ENCODE measurements at regions of chr2 and their contacts with region 1.

Region 1: DNA sequence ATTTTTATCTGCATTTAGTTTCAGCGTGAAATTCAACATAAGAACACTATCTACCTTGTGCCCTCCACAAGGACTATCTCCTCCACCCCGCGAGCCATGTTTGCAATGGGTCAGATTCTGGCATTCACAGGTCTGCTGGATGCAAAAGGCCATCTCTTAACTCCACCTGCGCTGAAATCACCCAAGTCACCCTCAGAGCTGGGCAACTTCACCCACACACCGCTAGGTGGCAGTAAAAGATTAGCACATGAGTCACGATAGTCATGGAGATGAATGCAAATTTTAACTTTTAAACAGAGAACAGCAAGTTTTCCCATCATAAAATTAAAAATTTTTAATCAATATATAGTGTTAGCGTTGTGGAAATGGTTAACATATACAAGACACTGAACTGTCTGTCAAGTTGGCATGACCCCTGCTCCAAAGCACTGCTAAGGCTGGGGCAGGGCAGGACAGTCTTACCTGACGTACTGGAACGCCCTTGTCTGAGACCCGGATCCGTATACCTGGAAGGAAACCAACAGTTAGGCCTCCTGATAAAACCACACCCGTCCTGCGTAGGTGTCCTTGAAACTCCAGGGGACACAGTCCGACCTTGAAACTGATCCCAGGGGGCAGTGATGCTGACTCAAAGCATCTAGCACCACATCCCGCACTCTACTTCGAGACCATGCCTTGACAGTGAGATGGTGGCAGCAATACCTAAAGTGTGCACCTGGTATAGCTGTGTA is 89.6 kb downstream of the UXS1 start:
- DNase-seq: peak; percentile 58
- H3K4me3 ChIP-seq: no peak overlapping the region
- H3K27ac ChIP-seq: no peak overlapping the region
- H3K4me1 ChIP-seq: no peaks in the 10 kb centered on the region
- H3K27me3 ChIP-seq: no peaks in the 10 kb centered on the region
- CTCF ChIP-seq: peak; percentile 82 to 88 (median 86)
- POLR2A ChIP-seq: no peak

Region 2: GRCh38 chr2:106193977-106194778 is 89.7 kb after region 1 on chr2 and contains the start of gene UXS1:
- intact Hi-C with region 1: loop called (anchors 5 kb)
- DNase-seq: peak; percentile 97
- H3K4me3 ChIP-seq: peak within 1 kb of the TSS; percentile 85 to 87
- H3K27ac ChIP-seq: peak within 1 kb of the TSS; percentile 71 to 83
- H3K4me1 ChIP-seq: no peaks in the 10 kb centered on the region
- H3K27me3 ChIP-seq: no peaks in the 10 kb centered on the region
- CTCF ChIP-seq: peak in 2 of 4 experiments; percentile 10 to 19
- POLR2A ChIP-seq: peak; percentile 64
- total RNA-seq, gene UXS1: 30.7 to 54.8 TPM

Region 3: DNA sequence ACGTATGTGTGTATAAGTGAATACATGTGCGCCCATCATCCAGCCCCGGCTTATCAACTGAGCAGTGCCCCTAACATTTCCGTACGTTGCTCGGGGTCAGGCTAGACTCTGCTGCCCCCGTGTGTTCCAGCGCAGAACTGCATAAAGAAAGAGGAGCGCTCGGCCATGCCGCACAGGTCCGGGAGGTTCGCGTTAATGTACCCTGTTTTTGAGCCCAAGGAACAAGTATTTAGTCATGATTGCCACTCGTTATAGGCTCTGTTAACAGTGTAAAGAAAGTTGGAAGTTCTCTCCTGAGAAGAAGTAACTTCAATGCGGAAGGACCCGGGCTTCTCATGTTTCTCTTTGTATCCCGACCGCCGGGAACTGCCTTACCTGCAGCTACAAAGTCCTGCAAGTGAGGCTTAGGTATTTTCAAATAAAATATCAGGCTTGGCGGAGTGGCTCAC is 438.3 kb after region 1 on chr2:
- intact Hi-C with region 1: loop called (anchors 5 kb)
- DNase-seq: peak; percentile 72
- H3K4me3 ChIP-seq: peak overlapping the region in 1 of 2 donors; percentile 7
- H3K27ac ChIP-seq: peak overlapping the region; percentile 75 to 77
- H3K4me1 ChIP-seq: peaks cover 5% of the 10 kb centered on the region
- H3K27me3 ChIP-seq: no peaks in the 10 kb centered on the region
- CTCF ChIP-seq: peak; percentile 72 to 87 (median 80)
- POLR2A ChIP-seq: no peak

Region 4: GRCh38 chr2:106582148-106583143 is 477.9 kb after region 1 on chr2:
- intact Hi-C with region 1: loop called (anchors 5 kb)
- DNase-seq: peak; percentile 79
- H3K4me3 ChIP-seq: no peak overlapping the region
- H3K27ac ChIP-seq: no peak overlapping the region
- H3K4me1 ChIP-seq: no peaks in the 10 kb centered on the region
- H3K27me3 ChIP-seq: no peaks in the 10 kb centered on the region
- CTCF ChIP-seq: peak; percentile 73 to 91 (median 83)
- POLR2A ChIP-seq: no peak